Activated CD4-positive, alpha-beta memory T cell treated with anti-CD3 and anti-CD28 coated beads, Interleukin-2, amount 10 ng/mL, durations not matched to agents 7 days and 5 days (primary cell): ENCODE measurements at regions of chr9 and their contacts with region 1.

Region 1: GRCh38 chr9:121121582-121122087 is 46.9 kb downstream of the CNTRL start:
- DNase-seq: peak; percentile 98
- H3K4me3 Mint-ChIP-seq: peak overlapping the region; percentile 73
- H3K27ac Mint-ChIP-seq: peak overlapping the region; percentile 86
- H3K4me1 Mint-ChIP-seq: peaks cover 46% of the 10 kb centered on the region
- H3K27me3 Mint-ChIP-seq: no peaks in the 10 kb centered on the region

Region 2: DNA sequence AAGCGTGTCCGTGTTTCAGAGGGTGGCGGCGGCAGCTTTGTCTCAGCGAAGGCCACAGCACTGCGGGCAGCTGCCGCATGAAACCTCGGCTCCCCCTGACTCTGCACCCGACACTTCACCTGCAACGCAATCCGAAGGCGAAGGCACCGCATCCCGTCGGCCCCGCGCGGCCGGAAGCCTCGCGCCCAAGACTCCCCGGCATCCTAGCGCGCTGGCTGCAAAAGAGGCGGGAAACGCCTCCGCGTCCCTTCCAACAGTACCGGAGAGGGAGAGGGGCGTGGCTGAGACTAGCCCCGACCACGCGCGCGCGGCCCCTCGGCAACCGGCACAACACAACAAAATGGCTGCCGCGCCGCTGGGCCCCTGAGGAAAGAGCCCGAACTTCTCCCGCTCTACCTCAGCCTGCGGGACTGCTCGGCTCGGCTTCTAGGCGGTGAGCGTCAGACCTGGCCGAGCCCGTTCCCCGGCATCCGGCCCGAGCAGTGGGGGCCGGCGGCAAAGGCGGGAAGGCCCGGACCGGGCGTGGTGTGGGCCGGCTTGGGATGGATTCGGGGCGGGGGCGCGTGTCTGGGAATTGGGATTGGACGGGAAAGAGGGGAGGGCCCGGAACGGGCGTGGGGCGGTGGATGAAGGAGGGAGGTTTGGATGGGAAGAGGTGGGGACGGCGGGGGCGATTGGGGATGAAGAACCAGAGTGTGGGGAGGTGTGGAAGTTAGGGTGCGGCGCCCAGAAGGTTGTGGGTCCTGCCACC is 46.8 kb before region 1 on chr9 and contains the start of gene CNTRL:
- CTCF ChIA-PET with region 1: interaction called, 10 read pairs
- POLR2A ChIA-PET with region 1: interaction called, 44 read pairs
- DNase-seq: peak; percentile 93
- H3K4me3 Mint-ChIP-seq: peak within 1 kb of the TSS; percentile 96
- H3K27ac Mint-ChIP-seq: peak within 1 kb of the TSS; percentile 91
- H3K4me1 Mint-ChIP-seq: peaks cover 53% of the 10 kb centered on the region
- H3K27me3 Mint-ChIP-seq: no peaks in the 10 kb centered on the region
- total RNA-seq, gene CNTRL: 84.1 to 86.9 TPM

Region 3: DNA sequence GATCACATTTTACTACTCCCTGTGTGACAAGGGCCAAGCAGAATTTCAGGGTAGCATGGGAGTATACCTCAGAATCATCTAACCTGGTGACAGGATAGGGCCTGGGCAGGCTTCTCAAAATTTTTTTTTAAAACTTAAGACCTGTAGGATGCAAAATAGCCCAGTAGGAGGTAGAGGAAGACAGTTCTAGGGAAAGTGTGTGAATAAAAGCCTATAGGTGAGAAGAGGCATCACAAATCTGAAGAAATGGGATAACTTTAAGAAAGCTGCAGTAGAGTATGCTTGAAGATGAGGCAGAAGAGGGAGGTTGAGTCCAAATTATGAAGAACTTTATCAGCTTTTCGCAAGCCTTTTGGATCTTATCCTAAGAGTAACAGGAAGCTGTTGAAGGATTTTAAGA is 14.6 kb before region 1 on chr9:
- CTCF ChIA-PET with region 1: interaction called, 15 read pairs
- POLR2A ChIA-PET with region 1: interaction called, 17 read pairs
- DNase-seq: no peak
- H3K4me3 Mint-ChIP-seq: no peak overlapping the region
- H3K27ac Mint-ChIP-seq: no peak overlapping the region
- H3K4me1 Mint-ChIP-seq: peaks cover 17% of the 10 kb centered on the region
- H3K27me3 Mint-ChIP-seq: no peaks in the 10 kb centered on the region

Region 4: DNA sequence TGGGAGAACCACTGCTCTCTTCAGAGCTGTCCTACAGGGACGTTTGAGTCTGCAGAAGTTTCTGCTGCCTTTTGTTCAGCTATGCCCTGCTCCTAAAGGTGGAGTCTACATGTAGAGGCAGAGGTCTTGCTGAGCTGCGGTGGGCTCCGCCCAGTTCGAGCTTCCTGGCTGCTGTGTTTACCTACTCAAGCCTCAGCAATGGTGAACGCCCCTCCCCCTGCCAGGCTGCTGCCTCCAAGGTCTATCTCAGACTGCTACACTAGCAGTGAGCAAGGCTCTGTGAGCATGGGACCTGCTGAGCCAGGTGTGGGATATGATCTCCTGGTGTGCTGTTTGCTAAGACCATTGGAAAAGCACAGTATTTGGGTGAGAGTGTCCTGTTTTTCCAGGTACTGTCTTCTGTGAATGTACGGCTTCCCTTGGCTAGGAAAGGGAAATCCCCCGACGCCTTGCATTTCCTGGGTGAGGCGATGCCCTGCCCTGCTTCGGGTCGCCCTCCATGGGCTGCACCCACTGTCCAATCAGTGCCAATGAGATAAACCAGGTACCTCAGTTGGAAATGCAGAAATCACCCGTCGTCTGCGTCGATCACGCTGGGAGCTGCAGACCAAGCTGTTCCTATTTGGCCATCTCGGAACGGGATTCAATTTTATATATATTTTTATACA is 11.6 kb after region 1 on chr9:
- CTCF ChIA-PET with region 1: interaction called, 19 read pairs
- POLR2A ChIA-PET with region 1: interaction called, 88 read pairs
- DNase-seq: peak; percentile 90
- H3K4me3 Mint-ChIP-seq: peak overlapping the region; percentile 33
- H3K27ac Mint-ChIP-seq: peak overlapping the region; percentile 87
- H3K4me1 Mint-ChIP-seq: peaks cover 64% of the 10 kb centered on the region
- H3K27me3 Mint-ChIP-seq: no peaks in the 10 kb centered on the region

Region 5: DNA sequence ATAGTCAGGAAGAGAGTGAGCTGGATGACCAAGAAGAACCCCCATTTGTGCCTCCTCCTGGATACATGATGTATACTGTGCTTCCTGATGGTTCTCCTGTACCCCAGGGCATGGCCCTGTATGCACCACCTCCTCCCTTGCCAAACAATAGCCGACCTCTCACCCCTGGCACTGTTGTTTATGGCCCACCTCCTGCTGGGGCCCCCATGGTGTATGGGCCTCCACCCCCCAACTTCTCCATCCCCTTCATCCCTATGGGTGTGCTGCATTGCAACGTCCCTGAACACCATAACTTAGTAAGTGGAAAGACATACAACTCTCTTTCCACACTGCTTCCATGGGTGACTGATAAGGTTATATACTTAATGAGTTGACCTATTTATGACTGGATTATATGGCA is 28.6 kb after region 1 on chr9:
- CTCF ChIA-PET with region 1: interaction called, 3 read pairs
- POLR2A ChIA-PET with region 1: interaction called, 11 read pairs
- DNase-seq: no peak
- H3K4me3 Mint-ChIP-seq: no peak overlapping the region
- H3K27ac Mint-ChIP-seq: no peak overlapping the region
- H3K4me1 Mint-ChIP-seq: peaks cover 41% of the 10 kb centered on the region
- H3K27me3 Mint-ChIP-seq: no peaks in the 10 kb centered on the region

Region 6: DNA sequence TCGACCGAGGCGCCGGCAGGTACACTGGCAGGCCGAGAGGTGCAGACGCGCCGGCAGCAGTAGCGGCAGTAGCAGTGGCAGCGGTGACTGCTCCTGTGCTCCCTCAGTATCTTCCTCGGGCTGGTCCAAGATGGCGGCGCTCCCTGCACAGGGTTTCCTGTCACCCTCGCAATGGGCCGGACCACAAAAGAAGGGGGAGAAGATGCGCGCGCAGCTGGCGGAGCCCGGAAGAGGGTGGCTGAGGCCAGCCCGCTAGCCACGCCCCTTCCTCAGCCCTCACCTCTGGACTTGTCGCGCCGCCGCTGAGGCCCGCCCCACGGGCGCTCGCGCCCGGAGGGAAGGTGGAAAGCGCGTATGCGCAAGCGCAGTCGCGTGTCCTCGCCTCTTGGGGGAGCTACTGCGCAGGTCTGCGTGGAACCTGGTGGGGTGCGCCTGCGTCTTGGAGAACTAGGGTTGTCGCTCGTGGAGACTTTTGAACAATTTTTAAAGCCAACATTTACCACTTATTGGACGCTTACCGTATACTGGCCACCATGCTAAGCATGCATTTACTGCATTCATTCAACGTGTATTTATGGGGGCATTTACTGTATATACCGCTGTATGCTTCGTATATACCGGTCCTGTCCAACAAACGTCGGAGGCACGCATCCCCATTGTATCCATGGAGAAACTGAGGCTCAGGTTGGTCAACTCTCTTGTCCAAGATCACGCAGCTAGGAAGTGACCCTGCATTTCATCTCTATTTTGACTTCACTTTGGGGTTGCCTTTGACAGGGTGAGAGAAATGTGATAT is 80.3 kb after region 1 on chr9 and contains the start of gene RAB14:
- CTCF ChIA-PET with region 1: interaction called, 4 read pairs
- POLR2A ChIA-PET with region 1: interaction called, 21 read pairs
- DNase-seq: peak; percentile 100
- H3K4me3 Mint-ChIP-seq: peak within 1 kb of the TSS; percentile 92
- H3K27ac Mint-ChIP-seq: peak within 1 kb of the TSS; percentile 92
- H3K4me1 Mint-ChIP-seq: peaks cover 59% of the 10 kb centered on the region
- H3K27me3 Mint-ChIP-seq: no peaks in the 10 kb centered on the region
- total RNA-seq, gene RAB14: 65.8 to 68.1 TPM